Gastrocnemius medialis (tissue), 4 donors: ENCODE measurements at regions of chr13 and their contacts with region 1.

Region 1: DNA sequence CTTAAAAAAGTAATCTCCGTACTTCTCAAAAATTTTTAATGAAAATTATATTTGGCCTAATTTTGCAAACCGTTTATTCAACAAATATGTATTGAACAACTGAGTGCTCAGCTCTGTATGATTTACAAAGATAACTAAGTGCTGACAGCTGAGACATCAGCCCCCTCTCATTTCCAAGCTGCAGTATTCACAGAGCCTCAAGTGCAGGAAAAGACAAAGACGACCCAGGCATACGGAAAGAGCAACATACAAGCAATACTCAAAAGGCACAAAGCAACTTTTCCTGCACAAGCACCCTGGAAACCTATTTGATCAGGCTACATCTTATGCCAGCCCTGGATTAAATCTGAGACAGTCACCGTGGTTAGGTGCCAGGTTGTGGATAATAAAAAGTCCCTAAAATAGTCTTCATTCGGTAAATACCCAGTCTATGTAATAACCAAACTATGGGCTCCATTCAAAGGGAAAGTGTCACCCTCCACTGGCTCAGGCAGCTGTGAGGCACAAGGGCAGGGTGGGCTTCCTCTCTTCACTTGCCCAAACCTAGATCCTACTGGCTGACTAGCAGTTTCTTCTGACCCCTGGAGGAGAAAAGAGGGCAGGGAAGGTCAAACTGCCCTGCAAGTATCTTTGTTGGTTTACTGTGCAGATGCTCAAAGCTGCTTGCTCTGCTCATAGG is 65.5 kb downstream of the TBC1D4 start:
- DNase-seq: no peak
- ATAC-seq: peak in 1 of 2 donors; percentile 7
- H3K4me3 ChIP-seq: no peak overlapping the region
- H3K27ac ChIP-seq: peak overlapping the region; percentile 80 to 89 (median 87)
- H3K4me1 ChIP-seq: peaks cover 68 to 83% of the 10 kb centered on the region in 2 donors
- H3K27me3 ChIP-seq: no peaks in the 10 kb centered on the region
- CTCF ChIP-seq: no peak
- POLR2A ChIP-seq: no peak

Region 2: GRCh38 chr13:74978596-74978995 is 437.9 kb before region 1 on chr13:
- in situ Hi-C with region 1: no loop called
- intact Hi-C with region 1: no loop called
- DNase-seq: no peak
- ATAC-seq: no peak
- H3K4me3 ChIP-seq: no peak overlapping the region
- H3K27ac ChIP-seq: no peak overlapping the region
- H3K4me1 ChIP-seq: no peaks in the 10 kb centered on the region
- H3K27me3 ChIP-seq: no peaks in the 10 kb centered on the region
- CTCF ChIP-seq: no peak
- POLR2A ChIP-seq: no peak

Region 3: GRCh38 chr13:75123428-75123827 is 293.0 kb before region 1 on chr13:
- in situ Hi-C with region 1: no loop called
- intact Hi-C with region 1: no loop called
- DNase-seq: no peak
- ATAC-seq: no peak
- H3K4me3 ChIP-seq: no peak overlapping the region
- H3K27ac ChIP-seq: no peak overlapping the region
- H3K4me1 ChIP-seq: no peaks in the 10 kb centered on the region
- H3K27me3 ChIP-seq: no peaks in the 10 kb centered on the region
- CTCF ChIP-seq: no peak
- POLR2A ChIP-seq: no peak

Region 4: DNA sequence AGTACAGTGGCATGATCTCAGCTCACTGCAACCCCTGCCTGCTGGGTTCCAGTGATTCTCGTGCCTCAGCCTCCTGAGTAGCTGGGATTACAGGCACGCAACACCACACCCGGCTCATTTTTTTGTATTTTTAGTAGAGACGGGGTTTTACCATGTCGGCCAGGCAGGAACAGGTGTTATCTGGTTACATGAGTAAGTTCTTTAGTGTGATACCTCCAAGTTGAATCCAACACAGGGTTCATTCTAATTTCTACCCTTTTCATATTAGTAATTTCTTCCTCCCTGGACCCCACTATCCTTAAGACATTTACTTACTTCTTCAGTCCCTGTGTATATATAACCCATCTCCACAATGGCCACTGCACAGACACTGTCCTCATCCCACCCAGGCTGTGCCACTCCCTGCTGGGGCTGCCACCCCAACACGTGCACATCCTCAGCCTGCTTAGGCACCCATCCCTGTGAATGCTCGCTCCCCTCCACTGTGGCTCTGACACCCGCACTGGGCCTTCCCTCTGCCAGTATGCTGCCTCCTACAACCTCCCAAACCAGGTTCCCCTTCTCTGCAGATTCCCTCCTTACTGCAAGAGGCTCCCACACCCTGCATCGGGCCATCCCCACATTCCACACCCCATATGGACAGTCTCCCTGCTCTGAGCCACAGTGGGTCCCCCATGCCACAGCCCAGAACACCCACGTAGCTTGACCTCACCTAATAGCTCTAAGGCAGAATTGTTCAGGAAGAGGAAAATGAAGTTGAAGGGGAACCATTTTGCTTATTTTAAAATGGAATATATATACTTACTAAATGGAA is 81.6 kb before region 1 on chr13:
- in situ Hi-C with region 1: no loop called
- intact Hi-C with region 1: no loop called
- DNase-seq: no peak
- ATAC-seq: no peak
- H3K4me3 ChIP-seq: no peak overlapping the region
- H3K27ac ChIP-seq: peak overlapping the region in 3 of 4 donors; percentile 28 to 54 (median 48)
- H3K4me1 ChIP-seq: peaks cover 18 to 43% of the 10 kb centered on the region in 2 donors
- H3K27me3 ChIP-seq: no peaks in the 10 kb centered on the region
- CTCF ChIP-seq: no peak
- POLR2A ChIP-seq: no peak

Region 5: DNA sequence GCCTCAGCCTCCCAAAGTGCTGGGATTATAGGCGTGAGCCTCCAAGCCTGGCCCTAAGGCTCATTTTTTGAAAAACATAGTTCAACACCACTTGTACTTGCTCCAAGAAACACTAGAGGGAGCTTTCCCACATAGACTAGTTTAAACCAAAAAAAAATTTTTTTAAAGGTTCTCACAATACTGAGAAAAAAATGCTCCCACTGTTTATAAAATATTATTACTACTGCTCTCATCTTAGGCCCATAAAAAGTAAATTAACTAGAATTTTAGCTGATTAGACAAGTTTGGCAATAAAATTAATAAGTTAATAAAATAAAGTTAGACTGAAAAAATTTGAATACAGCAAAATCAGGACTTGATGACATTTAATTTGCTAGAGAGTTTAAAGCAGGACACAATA is 43.9 kb before region 1 on chr13:
- in situ Hi-C with region 1: no loop called
- intact Hi-C with region 1: loop called (anchors 5 kb)
- DNase-seq: no peak
- ATAC-seq: peak; percentile 40 to 45
- H3K4me3 ChIP-seq: peak overlapping the region in 2 of 4 donors; percentile 0 to 37
- H3K27ac ChIP-seq: peak overlapping the region; percentile 75 to 89 (median 80)
- H3K4me1 ChIP-seq: peaks cover 76 to 84% of the 10 kb centered on the region in 2 donors
- H3K27me3 ChIP-seq: no peaks in the 10 kb centered on the region
- CTCF ChIP-seq: peak; percentile 67 to 76 (median 70)
- POLR2A ChIP-seq: no peak

Region 6: DNA sequence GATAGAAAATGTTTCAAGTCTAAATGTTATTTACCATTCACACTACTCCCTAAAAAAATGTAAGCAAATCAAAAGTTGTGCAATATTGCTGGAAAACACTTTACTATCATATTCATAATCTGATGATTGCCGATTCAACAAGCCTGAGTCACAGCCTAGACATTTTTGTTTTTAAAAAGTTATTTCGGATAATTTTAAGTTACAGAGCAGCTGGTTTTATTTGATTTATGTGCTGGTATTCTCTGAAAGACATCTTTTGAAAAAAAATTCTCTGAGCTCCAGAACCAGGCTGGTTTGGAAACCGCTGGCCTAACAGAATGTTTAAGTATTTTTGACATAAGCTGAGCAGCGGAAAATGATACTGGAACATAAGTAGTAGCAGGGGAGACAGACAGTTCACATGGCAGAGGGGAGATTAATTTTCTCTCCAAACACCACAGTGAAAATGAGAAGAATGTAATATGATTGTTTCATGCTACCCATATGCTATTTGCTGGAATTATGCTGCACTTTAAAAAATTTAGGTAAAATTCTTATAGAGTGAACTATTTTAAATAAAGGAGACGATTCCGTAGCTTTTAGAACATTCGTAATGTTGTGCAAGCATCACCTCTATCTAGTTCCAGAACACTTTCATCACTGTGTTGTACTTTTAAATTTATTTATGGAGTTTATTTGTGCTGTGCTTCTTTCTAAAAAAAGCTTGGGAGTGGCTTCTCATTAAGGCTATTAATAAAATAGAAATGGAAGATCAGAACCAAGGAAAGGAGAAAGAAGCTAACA is 29.4 kb after region 1 on chr13:
- in situ Hi-C with region 1: no loop called
- intact Hi-C with region 1: loop called (anchors 2 kb)
- DNase-seq: no peak
- ATAC-seq: peak; percentile 92 to 93
- H3K4me3 ChIP-seq: peak overlapping the region; percentile 26 to 52 (median 45)
- H3K27ac ChIP-seq: peak overlapping the region; percentile 90 to 98 (median 93)
- H3K4me1 ChIP-seq: peaks cover 40 to 52% of the 10 kb centered on the region in 2 donors
- H3K27me3 ChIP-seq: no peaks in the 10 kb centered on the region
- CTCF ChIP-seq: no peak
- POLR2A ChIP-seq: no peak